ENCODE measurements at regions of chr16 and their contacts with region 1.

Region 1: GRCh38 chr16:30091474-30092372 is at the start of gene TBX6:
- DNase-seq: peak; percentile 95
- H3K4me3 Mint-ChIP-seq: peak within 1 kb of the TSS; percentile 86
- H3K27ac Mint-ChIP-seq: peak within 1 kb of the TSS; percentile 95
- H3K4me1 Mint-ChIP-seq: peaks cover 54% of the 10 kb centered on the region
- H3K27me3 Mint-ChIP-seq: no peaks in the 10 kb centered on the region
- total RNA-seq, gene TBX6: 3.6 to 4.7 TPM

Region 2: GRCh38 chr16:30052671-30053372 is 38.9 kb before region 1 on chr16:
- CTCF ChIA-PET with region 1: interaction called, 5 read pairs
- intact Hi-C with region 1: loop called (anchors 1 kb)
- DNase-seq: peak; percentile 95
- H3K4me3 Mint-ChIP-seq: peak overlapping the region; percentile 87
- H3K27ac Mint-ChIP-seq: peak overlapping the region; percentile 48
- H3K4me1 Mint-ChIP-seq: peaks cover 20% of the 10 kb centered on the region
- H3K27me3 Mint-ChIP-seq: no peaks in the 10 kb centered on the region

Region 3: GRCh38 chr16:30075507-30076275 is 16.0 kb before region 1 on chr16 and contains the start of gene PPP4C:
- CTCF ChIA-PET with region 1: interaction called, 50 read pairs
- intact Hi-C with region 1: loop called (anchors 1 kb)
- DNase-seq: peak; percentile 93
- H3K4me3 Mint-ChIP-seq: peak within 1 kb of the TSS; percentile 92
- H3K27ac Mint-ChIP-seq: peak within 1 kb of the TSS; percentile 94
- H3K4me1 Mint-ChIP-seq: peaks cover 33% of the 10 kb centered on the region
- H3K27me3 Mint-ChIP-seq: no peaks in the 10 kb centered on the region
- total RNA-seq, gene PPP4C: 104 to 105 TPM

Region 4: GRCh38 chr16:30122604-30123160 is 31.0 kb after region 1 on chr16:
- CTCF ChIA-PET with region 1: interaction called, 4 read pairs
- intact Hi-C with region 1: loop called (anchors 1 kb)
- DNase-seq: no peak
- H3K4me3 Mint-ChIP-seq: peak overlapping the region; percentile 88
- H3K27ac Mint-ChIP-seq: peak overlapping the region; percentile 85
- H3K4me1 Mint-ChIP-seq: peaks cover 30% of the 10 kb centered on the region
- H3K27me3 Mint-ChIP-seq: no peaks in the 10 kb centered on the region

Region 5: DNA sequence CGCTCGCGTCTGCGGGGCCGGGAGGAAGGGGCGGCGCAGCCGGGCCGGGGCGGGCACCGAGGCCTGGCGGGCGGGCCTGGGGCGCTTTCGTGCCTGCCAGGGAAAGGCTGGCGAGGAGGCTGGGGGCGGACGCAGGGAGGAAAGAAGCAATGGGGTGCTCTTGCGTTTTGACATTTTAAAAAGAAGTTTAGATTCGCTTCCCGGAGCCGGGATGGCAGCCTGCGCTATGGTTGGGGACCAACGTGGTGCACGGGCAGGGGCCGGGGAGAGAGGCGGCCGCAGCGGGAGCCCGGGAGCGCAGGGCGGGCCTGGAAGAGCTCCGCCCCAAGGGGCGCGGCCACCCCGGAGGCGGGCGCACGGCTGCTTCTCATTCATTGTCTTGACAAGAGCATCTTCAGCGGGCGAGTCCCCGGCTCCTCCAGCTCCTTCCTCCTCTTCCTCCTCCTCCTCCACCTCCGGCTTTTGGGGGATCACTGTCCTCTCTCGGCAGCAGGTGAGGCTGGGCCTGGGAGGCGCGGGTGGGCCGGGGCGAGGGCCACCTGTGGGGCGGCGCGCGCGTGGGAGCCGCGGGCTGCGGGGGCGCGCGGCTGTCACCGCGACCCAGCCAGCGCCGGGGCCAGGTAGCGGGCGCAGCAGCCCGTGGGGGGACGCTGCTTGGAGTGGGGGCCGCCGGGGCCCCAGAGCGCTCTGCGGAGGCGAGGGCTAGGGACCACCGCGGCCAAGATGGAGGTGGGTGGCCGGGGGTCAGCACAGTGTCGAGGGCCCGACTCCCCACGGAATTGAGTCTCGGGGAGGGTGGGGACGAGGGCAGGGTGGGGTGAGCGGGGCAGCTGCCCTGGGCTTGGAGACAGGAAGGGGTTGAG is 91.7 kb after region 1 on chr16 and contains the start of gene CORO1A:
- CTCF ChIA-PET with region 1: interaction called, 16 read pairs
- intact Hi-C with region 1: loop called (anchors 1 kb)
- DNase-seq: peak; percentile 90
- H3K4me3 Mint-ChIP-seq: peak within 1 kb of the TSS; percentile 100
- H3K27ac Mint-ChIP-seq: peak within 1 kb of the TSS; percentile 100
- H3K4me1 Mint-ChIP-seq: peaks cover 22% of the 10 kb centered on the region
- H3K27me3 Mint-ChIP-seq: no peaks in the 10 kb centered on the region
- total RNA-seq, gene CORO1A: 855 to 866 TPM

Region 6: GRCh38 chr16:30407102-30407803 is 315.5 kb after region 1 on chr16 and contains the start of gene ZNF771:
- CTCF ChIA-PET with region 1: interaction called, 11 read pairs
- intact Hi-C with region 1: loop called (anchors 1 kb)
- DNase-seq: peak; percentile 91
- H3K4me3 Mint-ChIP-seq: peak within 1 kb of the TSS; percentile 98
- H3K27ac Mint-ChIP-seq: peak within 1 kb of the TSS; percentile 93
- H3K4me1 Mint-ChIP-seq: peaks cover 32% of the 10 kb centered on the region
- H3K27me3 Mint-ChIP-seq: no peaks in the 10 kb centered on the region
- total RNA-seq, gene ZNF771: 3.4 to 4.7 TPM

Measured in activated naive CD4-positive, alpha-beta T cell treated with anti-CD3 and anti-CD28 coated beads for 36 hours (primary cell).